ENCODE measurements at regions of chr17 and their contacts with region 1.

Region 1: DNA sequence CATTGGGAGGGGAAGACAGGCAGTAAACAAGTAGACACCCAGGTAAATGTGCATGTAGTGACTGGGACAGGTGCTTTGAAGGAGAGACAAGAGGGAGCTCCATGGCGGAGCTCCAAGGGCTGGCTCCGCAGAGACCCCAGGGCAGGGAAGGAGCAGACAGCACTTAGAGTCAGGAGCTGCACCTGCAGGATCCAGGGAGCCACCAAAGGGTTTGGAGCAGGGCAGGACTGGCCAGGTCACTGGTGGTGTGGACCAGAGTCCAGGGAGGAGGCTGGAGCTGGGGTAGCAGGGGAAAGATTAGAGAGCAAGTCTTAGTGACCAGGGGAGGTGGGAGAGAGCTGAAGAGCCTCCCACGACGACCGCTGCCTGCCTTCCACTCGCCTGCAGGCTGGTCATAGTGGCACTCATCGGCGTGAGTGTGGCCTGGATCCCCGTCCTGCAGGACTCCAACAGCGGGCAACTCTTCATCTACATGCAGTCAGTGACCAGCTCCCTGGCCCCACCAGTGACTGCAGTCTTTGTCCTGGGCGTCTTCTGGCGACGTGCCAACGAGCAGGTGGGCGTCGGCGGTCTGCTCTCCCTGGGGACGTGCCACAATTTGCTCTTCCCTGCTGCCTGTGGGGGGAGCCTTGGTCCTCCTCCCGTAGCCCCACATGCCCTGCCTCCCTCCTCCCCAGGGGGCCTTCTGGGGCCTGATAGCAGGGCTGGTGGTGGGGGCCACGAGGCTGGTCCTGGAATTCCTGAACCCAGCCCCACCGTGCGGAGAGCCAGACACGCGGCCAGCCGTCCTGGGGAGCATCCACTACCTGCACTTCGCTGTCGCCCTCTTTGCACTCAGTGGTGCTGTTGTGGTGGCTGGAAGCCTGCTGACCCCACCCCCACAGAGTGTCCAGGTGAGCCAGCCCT is 14.7 kb upstream of the FAM83G start:
- DNase-seq: peak; percentile 42 to 83 (median 66)
- ATAC-seq: peak; percentile 23; the same call in 1 of the 3 replicates
- H3K4me3 ChIP-seq: no peak overlapping the region
- H3K27ac ChIP-seq: no peak overlapping the region
- H3K4me1 ChIP-seq: peaks cover 9 to 47% of the 10 kb centered on the region in 2 experiments; a peak in 4 of 5 replicates
- H3K27me3 ChIP-seq: no peaks in the 10 kb centered on the region
- CTCF ChIP-seq: no peak
- EP300 ChIP-seq: no peak
- POLR2A ChIP-seq: no peak
- RAD21 ChIP-seq: no peak

Region 2: GRCh38 chr17:18877104-18877503 is 142.2 kb before region 1 on chr17:
- CTCF ChIA-PET with region 1: no interaction called
- POLR2A ChIA-PET with region 1: no interaction called
- in situ Hi-C with region 1: no loop called
- intact Hi-C with region 1: no loop called
- DNase-seq: no peak
- ATAC-seq: no peak
- H3K4me3 ChIP-seq: no peak overlapping the region
- H3K27ac ChIP-seq: no peak overlapping the region
- H3K4me1 ChIP-seq: no peaks in the 10 kb centered on the region
- H3K27me3 ChIP-seq: no peaks in the 10 kb centered on the region
- CTCF ChIP-seq: no peak
- EP300 ChIP-seq: no peak
- POLR2A ChIP-seq: no peak
- RAD21 ChIP-seq: no peak

Region 3: GRCh38 chr17:18955009-18955408 is 64.3 kb before region 1 on chr17:
- CTCF ChIA-PET with region 1: no interaction called
- POLR2A ChIA-PET with region 1: no interaction called
- in situ Hi-C with region 1: no loop called
- intact Hi-C with region 1: no loop called
- DNase-seq: no peak
- ATAC-seq: no peak
- H3K4me3 ChIP-seq: no peak overlapping the region
- H3K27ac ChIP-seq: no peak overlapping the region
- H3K4me1 ChIP-seq: peaks cover 2 to 20% of the 10 kb centered on the region in 2 experiments; a peak in 3 of 5 replicates
- H3K27me3 ChIP-seq: peaks cover 0 to 8% of the 10 kb centered on the region in 2 experiments; a peak in 2 of 5 replicates
- CTCF ChIP-seq: no peak
- EP300 ChIP-seq: no peak
- POLR2A ChIP-seq: no peak
- RAD21 ChIP-seq: no peak

Region 4: DNA sequence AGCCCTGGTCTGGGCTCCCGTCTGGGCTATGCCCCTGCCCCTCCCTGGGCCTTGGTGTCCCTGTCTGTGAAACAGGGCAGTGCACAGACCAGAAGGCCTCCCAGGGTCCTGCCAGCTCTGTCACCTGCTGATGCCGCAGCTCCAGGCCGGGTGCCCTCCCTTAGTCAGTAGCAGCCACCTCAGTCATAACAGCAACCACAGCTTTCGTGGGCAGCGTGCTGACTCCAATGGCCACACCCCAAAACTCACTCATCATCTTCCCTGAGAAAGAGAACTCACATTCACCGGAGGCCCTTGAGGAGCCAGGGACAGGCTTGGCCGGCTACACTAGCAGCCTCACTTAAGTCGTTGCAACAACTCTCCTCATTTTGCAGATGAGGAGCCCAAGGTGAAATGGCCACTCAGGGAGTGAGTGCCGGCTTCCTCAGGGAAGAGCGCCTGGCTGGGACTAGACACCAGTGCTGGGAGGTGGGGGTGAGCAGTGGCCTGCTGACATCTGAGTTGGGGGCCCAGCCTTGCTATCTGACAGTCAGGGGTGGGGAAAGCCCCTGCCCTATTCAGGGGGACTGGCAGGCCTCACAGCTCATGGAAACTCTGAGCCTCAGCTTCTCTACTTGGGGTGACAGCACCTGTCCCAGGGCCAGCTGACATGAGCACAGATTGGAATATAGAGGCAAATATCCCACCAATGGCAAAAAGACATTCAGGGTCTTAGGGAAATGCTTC is 44.7 kb before region 1 on chr17:
- CTCF ChIA-PET with region 1: no interaction called
- POLR2A ChIA-PET with region 1: no interaction called
- in situ Hi-C with region 1: loop called (anchors 5 kb)
- intact Hi-C with region 1: no loop called
- DNase-seq: no peak
- ATAC-seq: no peak
- H3K4me3 ChIP-seq: no peak overlapping the region
- H3K27ac ChIP-seq: no peak overlapping the region
- H3K4me1 ChIP-seq: peaks cover 0 to 29% of the 10 kb centered on the region in 2 experiments; a peak in 3 of 5 replicates
- H3K27me3 ChIP-seq: no peaks in the 10 kb centered on the region
- CTCF ChIP-seq: no peak
- EP300 ChIP-seq: no peak
- POLR2A ChIP-seq: no peak
- RAD21 ChIP-seq: no peak

Region 5: GRCh38 chr17:19237389-19238166 is 218.3 kb after region 1 on chr17:
- CTCF ChIA-PET with region 1: no interaction called
- POLR2A ChIA-PET with region 1: no interaction called
- in situ Hi-C with region 1: no loop called
- intact Hi-C with region 1: no loop called
- DNase-seq: peak in 3 of 4 experiments; percentile 25 to 65 (median 64)
- ATAC-seq: peak; percentile 92
- H3K4me3 ChIP-seq: peak overlapping the region; percentile 84
- H3K27ac ChIP-seq: peak overlapping the region; percentile 69
- H3K4me1 ChIP-seq: peaks cover 9 to 11% of the 10 kb centered on the region in 2 experiments
- H3K27me3 ChIP-seq: no peaks in the 10 kb centered on the region
- CTCF ChIP-seq: peak in 2 of 3 experiments; percentile 12 to 28; a peak in 1 of 6 replicates
- EP300 ChIP-seq: no peak
- POLR2A ChIP-seq: peak; percentile 61
- RAD21 ChIP-seq: no peak